SK-N-SH (cell line): ENCODE measurements at regions of chr10 and their contacts with region 1.

Region 1: DNA sequence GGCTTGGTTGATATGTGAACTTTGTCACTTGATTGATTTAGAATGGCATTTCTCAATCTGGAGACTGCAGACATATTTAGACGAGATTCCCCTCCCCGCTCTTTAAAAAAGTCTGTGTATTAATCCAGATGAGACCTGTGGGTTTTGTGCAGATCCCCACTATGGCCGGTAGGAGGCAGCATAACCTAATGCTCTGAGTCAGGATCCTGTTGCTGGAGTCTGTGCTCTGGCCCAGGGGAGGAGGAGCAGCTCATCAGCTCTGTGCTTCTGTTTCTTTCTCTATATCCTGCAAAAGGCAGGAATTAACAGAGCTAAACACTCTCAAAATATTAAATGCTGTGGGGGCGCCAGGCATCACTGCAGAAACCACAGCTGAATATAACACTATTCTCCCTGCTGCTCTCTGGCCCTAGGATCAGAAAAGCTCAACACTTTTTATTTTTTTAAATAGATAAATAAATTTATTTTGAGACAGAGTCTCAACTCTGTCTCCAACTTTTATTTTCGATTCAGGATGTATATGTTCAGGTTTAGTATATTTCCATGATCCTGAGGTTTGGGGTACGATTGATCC is 23.9 kb upstream of the SEPHS1 start:
- DNase-seq: peak; percentile 91
- H3K4me3 ChIP-seq: peak overlapping the region in 1 of 2 experiments; percentile 33; a peak in 1 of 4 replicates
- H3K27ac ChIP-seq: no peak overlapping the region
- H3K4me1 ChIP-seq: no peaks in the 10 kb centered on the region
- H3K27me3 ChIP-seq: no peaks in the 10 kb centered on the region
- CTCF ChIP-seq: peak; percentile 98
- EP300 ChIP-seq: no peak
- RAD21 ChIP-seq: peak; percentile 99

Region 2: DNA sequence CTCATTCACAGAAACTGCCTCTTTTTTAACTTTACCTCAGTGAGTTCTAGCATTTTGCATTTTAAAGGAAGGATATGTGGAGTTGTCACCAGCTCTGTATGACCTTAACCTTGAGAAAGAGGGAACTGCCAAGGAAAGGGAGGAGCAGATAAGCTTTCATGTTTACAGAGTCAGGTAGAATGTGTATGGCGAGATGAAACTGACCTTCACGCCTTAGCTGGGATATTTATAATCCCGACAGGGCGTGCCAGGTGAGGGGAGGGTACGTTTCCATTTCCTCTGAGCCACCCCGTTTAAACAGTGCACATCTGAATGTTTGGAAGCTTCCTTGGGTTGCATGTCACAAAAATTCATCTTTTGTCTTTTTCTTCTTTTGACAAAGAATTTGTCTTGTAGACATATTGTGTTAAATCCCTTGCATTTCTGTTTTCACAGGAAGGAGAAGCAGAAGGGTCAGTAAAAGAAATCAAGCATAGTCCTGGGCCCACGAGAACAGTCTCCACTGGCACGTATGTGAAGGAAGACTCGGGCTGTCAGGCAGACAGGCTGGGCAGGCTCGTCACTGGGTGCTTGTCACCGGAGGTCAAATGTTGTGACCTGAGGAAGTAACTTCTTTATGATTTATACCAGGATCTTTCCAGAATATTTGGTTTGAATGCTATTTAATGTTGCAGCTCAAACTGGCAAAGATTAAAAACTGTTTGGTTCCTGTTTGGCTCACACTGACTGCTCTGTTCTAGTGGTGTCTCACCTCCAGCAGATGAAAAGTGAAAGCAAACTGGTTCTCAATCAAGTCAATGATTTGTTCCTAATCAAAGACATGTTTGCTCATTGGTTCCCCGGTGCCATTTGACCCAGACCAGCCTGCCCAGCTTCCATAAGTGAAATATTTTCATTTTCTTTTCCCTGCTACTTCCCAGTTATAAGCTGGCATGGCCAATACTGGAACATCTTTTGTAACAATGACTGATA is 255.9 kb before region 1 on chr10:
- CTCF ChIA-PET with region 1: no interaction called
- POLR2A ChIA-PET with region 1: no interaction called
- DNase-seq: no peak
- H3K4me3 ChIP-seq: no peak overlapping the region
- H3K27ac ChIP-seq: no peak overlapping the region
- H3K4me1 ChIP-seq: no peaks in the 10 kb centered on the region
- H3K27me3 ChIP-seq: no peaks in the 10 kb centered on the region
- CTCF ChIP-seq: no peak
- EP300 ChIP-seq: no peak
- RAD21 ChIP-seq: no peak

Region 3: GRCh38 chr10:13348216-13349017 is 23.6 kb before region 1 on chr10 and contains the start of gene SEPHS1:
- CTCF ChIA-PET with region 1: interaction called, 18 read pairs
- POLR2A ChIA-PET with region 1: interaction called, 3 read pairs
- DNase-seq: peak; percentile 97
- H3K4me3 ChIP-seq: peak within 1 kb of the TSS; percentile 79
- H3K27ac ChIP-seq: peak within 1 kb of the TSS; percentile 81 to 99
- H3K4me1 ChIP-seq: peaks cover 0 to 17% of the 10 kb centered on the region in 2 experiments; a peak in 2 of 4 replicates
- H3K27me3 ChIP-seq: no peaks in the 10 kb centered on the region
- CTCF ChIP-seq: no peak; the same call in 1 of the 2 replicates
- EP300 ChIP-seq: peak; percentile 25 to 56; a peak in 1 of 4 replicates
- RAD21 ChIP-seq: no peak
- polyA plus RNA-seq, gene SEPHS1: 64.8 and 79.8 TPM in 2 replicates

Region 4: DNA sequence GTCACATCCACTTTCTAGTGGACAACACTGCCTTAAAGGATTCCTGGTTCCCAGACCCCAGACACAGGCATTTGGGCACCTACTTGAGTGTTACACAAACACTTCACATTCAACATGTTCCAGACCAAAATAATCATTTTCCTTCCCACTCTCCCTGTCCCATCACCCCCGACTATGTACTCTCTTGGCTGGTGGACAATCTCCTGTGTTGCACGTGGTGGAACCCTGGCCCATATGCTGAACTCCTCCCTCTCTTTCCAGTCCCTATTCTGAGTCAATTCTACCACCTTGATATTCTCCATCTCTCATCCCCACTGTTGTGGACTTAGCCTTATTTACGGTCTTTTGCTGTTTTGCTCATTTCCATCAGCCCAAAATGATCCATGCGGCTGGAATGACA is 15.6 kb before region 1 on chr10:
- CTCF ChIA-PET with region 1: interaction called, 13 read pairs
- POLR2A ChIA-PET with region 1: no interaction called
- DNase-seq: no peak
- H3K4me3 ChIP-seq: no peak overlapping the region
- H3K27ac ChIP-seq: no peak overlapping the region
- H3K4me1 ChIP-seq: no peaks in the 10 kb centered on the region
- H3K27me3 ChIP-seq: no peaks in the 10 kb centered on the region
- CTCF ChIP-seq: no peak
- EP300 ChIP-seq: no peak
- RAD21 ChIP-seq: no peak

Region 5: DNA sequence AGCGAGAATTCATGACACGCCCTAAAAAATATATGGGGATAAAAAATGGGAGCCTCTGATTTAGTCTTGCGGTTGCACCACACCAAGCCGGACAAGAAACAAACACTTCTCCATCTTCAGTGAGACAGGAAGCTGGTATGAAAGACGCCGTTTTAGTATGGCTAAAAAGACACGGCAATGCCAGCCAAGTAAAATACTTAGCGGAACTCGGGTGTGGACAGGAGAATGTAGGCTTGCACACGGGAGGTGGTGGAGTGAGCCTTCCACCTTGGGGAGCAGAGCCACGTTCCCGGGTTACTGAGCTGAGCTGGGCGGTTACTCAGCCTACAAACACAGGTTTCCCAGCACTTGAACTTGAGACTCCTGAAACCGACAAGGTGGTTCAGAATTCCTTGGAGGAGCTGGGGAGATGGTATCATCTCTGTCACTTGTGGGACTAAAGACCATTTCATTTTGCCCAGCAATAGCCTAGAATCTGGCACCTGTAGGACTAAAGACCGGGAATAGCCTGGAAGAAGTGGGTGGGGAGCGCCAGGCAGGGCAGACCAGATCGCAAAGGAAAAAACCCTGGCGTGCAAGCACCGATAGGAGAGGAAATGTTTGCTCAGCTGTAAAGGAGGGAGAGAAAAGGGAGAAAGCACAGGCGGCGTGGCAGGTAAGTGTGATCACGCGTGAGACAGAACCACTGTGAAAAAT is 10.9 kb after region 1 on chr10:
- CTCF ChIA-PET with region 1: interaction called, 49 read pairs
- POLR2A ChIA-PET with region 1: no interaction called
- DNase-seq: no peak
- H3K4me3 ChIP-seq: peak overlapping the region; percentile 37 to 60
- H3K27ac ChIP-seq: no peak overlapping the region
- H3K4me1 ChIP-seq: peaks cover 0 to 8% of the 10 kb centered on the region in 2 experiments; a peak in 1 of 4 replicates
- H3K27me3 ChIP-seq: peaks cover 29% of the 10 kb centered on the region
- CTCF ChIP-seq: no peak
- EP300 ChIP-seq: no peak
- RAD21 ChIP-seq: no peak

Region 6: GRCh38 chr10:13658264-13658663 is 286.3 kb after region 1 on chr10:
- CTCF ChIA-PET with region 1: no interaction called
- POLR2A ChIA-PET with region 1: no interaction called
- DNase-seq: no peak
- H3K4me3 ChIP-seq: no peak overlapping the region
- H3K27ac ChIP-seq: no peak overlapping the region
- H3K4me1 ChIP-seq: peaks cover 3 to 14% of the 10 kb centered on the region in 2 experiments; a peak in 2 of 4 replicates
- H3K27me3 ChIP-seq: no peaks in the 10 kb centered on the region
- CTCF ChIP-seq: no peak
- EP300 ChIP-seq: no peak
- RAD21 ChIP-seq: no peak